ENCODE measurements at regions of chr4 and their contacts with region 1.

Region 1: GRCh38 chr4:152500800-152501434 is 35.0 kb downstream of the FBXW7 start:
- DNase-seq: peak; percentile 34
- H3K4me3 ChIP-seq: no peak overlapping the region
- H3K27ac ChIP-seq: no peak overlapping the region
- H3K4me1 ChIP-seq: peaks cover 0 to 10% of the 10 kb centered on the region in 2 experiments; a peak in 3 of 4 replicates
- H3K27me3 ChIP-seq: no peaks in the 10 kb centered on the region
- CTCF ChIP-seq: peak; percentile 94
- EP300 ChIP-seq: no peak
- RAD21 ChIP-seq: peak; percentile 83

Region 2: GRCh38 chr4:152294331-152294730 is 206.6 kb before region 1 on chr4:
- CTCF ChIA-PET with region 1: no interaction called
- POLR2A ChIA-PET with region 1: no interaction called
- DNase-seq: no peak
- H3K4me3 ChIP-seq: no peak overlapping the region
- H3K27ac ChIP-seq: no peak overlapping the region
- H3K4me1 ChIP-seq: no peaks in the 10 kb centered on the region
- H3K27me3 ChIP-seq: no peaks in the 10 kb centered on the region; the same call in 1 of the 2 replicates
- CTCF ChIP-seq: no peak
- EP300 ChIP-seq: no peak
- RAD21 ChIP-seq: no peak

Region 3: GRCh38 chr4:152454398-152455011 is 46.4 kb before region 1 on chr4:
- CTCF ChIA-PET with region 1: interaction called, 25 read pairs
- POLR2A ChIA-PET with region 1: no interaction called
- DNase-seq: peak; percentile 51
- H3K4me3 ChIP-seq: no peak overlapping the region
- H3K27ac ChIP-seq: no peak overlapping the region
- H3K4me1 ChIP-seq: no peaks in the 10 kb centered on the region; a peak in 1 of 4 replicates
- H3K27me3 ChIP-seq: no peaks in the 10 kb centered on the region
- CTCF ChIP-seq: peak; percentile 84
- EP300 ChIP-seq: no peak
- RAD21 ChIP-seq: peak; percentile 84

Region 4: GRCh38 chr4:152485726-152486276 is 15.1 kb before region 1 on chr4:
- CTCF ChIA-PET with region 1: interaction called, 42 read pairs
- POLR2A ChIA-PET with region 1: no interaction called
- DNase-seq: no peak
- H3K4me3 ChIP-seq: no peak overlapping the region
- H3K27ac ChIP-seq: peak overlapping the region in 1 of 2 experiments; percentile 39; a peak in 3 of 4 replicates
- H3K4me1 ChIP-seq: peaks cover 5 to 10% of the 10 kb centered on the region in 2 experiments; a peak in 2 of 4 replicates
- H3K27me3 ChIP-seq: no peaks in the 10 kb centered on the region
- CTCF ChIP-seq: no peak
- EP300 ChIP-seq: no peak
- RAD21 ChIP-seq: no peak

Region 5: DNA sequence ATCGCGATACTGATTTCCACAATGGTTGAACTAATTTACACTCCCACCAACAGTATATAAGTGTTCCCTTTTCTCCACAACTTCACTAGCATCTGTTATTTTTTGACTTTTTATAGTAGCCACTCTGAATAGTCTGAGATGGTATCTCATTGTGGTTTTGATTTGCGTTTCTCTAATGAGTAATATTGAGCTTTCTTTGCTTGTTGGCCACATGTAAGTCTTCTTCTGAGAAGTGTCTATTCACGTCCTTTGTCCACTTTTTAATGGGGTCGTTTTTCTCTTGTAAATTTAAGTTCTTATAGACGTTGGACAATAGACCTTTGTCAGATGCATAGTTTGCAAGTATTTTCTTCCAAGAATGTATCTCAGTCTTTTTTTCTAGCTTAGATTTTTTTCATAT is 25.0 kb after region 1 on chr4:
- CTCF ChIA-PET with region 1: interaction called, 42 read pairs
- POLR2A ChIA-PET with region 1: no interaction called
- DNase-seq: no peak
- H3K4me3 ChIP-seq: no peak overlapping the region
- H3K27ac ChIP-seq: no peak overlapping the region
- H3K4me1 ChIP-seq: peaks cover 2 to 4% of the 10 kb centered on the region in 2 experiments; a peak in 2 of 4 replicates
- H3K27me3 ChIP-seq: no peaks in the 10 kb centered on the region
- CTCF ChIP-seq: no peak
- EP300 ChIP-seq: no peak
- RAD21 ChIP-seq: no peak

Region 6: DNA sequence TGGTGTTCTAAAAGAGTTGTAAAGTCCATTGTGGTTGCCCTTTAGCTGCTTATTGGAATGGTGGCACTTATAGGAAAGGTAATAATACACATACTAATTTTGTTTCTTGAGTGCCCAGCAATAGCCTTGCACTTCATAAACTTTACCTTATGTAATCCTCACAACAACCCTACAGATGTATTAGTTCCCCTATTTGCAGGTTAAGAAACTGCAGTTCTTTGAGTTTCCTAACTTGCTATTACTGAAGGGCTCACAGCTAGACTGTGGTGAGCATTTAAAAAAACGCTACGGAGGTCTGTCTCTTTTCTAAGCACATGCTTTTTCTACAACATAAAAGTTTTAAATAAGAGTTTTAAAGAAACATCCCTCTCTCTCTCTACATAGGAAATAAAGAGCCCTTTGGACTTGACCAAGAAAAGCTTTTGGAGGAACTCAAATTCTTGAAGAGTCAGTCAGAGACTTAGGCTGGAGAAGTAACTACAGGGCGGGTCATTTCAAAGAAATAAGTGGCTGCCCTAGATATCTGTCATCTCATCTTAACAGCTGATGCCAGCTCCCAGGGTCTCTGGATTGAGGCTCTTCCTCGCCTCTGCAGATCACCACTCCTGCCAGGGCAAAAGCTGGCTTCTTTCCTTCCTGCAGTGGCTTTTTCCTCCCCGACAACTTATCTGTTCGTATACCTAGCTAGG is 76.9 kb after region 1 on chr4:
- CTCF ChIA-PET with region 1: interaction called, 13 read pairs
- POLR2A ChIA-PET with region 1: no interaction called
- DNase-seq: no peak
- H3K4me3 ChIP-seq: no peak overlapping the region
- H3K27ac ChIP-seq: no peak overlapping the region
- H3K4me1 ChIP-seq: no peaks in the 10 kb centered on the region; a peak in 1 of 4 replicates
- H3K27me3 ChIP-seq: no peaks in the 10 kb centered on the region
- CTCF ChIP-seq: no peak
- EP300 ChIP-seq: no peak
- RAD21 ChIP-seq: no peak

Region 7: DNA sequence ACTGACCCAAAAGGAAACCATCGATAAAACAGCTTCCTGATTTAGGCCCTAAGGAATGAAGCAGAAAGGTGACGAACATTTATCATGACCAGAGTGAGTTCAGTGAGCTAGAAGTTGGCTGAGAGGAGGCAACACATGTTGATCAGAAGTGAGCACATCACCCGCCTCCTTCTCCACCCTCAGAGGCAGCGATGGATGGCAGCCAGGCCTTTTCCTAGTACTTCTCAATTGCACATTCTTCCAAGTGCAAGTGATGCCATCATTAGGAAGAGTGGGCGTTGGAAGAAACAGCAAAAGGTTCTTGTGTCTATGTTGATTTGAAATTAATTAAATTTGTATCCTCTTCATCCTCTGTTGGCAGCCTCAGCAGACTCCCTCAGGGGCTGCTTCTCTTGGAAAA is 127.2 kb after region 1 on chr4:
- CTCF ChIA-PET with region 1: interaction called, 12 read pairs
- POLR2A ChIA-PET with region 1: no interaction called
- DNase-seq: no peak
- H3K4me3 ChIP-seq: no peak overlapping the region
- H3K27ac ChIP-seq: no peak overlapping the region
- H3K4me1 ChIP-seq: peaks cover 0 to 2% of the 10 kb centered on the region in 2 experiments; a peak in 1 of 4 replicates
- H3K27me3 ChIP-seq: no peaks in the 10 kb centered on the region
- CTCF ChIP-seq: no peak
- EP300 ChIP-seq: no peak
- RAD21 ChIP-seq: no peak

Region 8: GRCh38 chr4:152646221-152646620 is 145.3 kb after region 1 on chr4:
- CTCF ChIA-PET with region 1: interaction called, 125 read pairs
- POLR2A ChIA-PET with region 1: no interaction called
- DNase-seq: no peak
- H3K4me3 ChIP-seq: no peak overlapping the region
- H3K27ac ChIP-seq: no peak overlapping the region
- H3K4me1 ChIP-seq: peaks cover 0 to 11% of the 10 kb centered on the region in 2 experiments; a peak in 1 of 4 replicates
- H3K27me3 ChIP-seq: no peaks in the 10 kb centered on the region
- CTCF ChIP-seq: no peak
- EP300 ChIP-seq: no peak
- RAD21 ChIP-seq: no peak